Tibial artery (tissue), 4 donors: ENCODE measurements at regions of chr12 and their contacts with region 1.

Region 1: DNA sequence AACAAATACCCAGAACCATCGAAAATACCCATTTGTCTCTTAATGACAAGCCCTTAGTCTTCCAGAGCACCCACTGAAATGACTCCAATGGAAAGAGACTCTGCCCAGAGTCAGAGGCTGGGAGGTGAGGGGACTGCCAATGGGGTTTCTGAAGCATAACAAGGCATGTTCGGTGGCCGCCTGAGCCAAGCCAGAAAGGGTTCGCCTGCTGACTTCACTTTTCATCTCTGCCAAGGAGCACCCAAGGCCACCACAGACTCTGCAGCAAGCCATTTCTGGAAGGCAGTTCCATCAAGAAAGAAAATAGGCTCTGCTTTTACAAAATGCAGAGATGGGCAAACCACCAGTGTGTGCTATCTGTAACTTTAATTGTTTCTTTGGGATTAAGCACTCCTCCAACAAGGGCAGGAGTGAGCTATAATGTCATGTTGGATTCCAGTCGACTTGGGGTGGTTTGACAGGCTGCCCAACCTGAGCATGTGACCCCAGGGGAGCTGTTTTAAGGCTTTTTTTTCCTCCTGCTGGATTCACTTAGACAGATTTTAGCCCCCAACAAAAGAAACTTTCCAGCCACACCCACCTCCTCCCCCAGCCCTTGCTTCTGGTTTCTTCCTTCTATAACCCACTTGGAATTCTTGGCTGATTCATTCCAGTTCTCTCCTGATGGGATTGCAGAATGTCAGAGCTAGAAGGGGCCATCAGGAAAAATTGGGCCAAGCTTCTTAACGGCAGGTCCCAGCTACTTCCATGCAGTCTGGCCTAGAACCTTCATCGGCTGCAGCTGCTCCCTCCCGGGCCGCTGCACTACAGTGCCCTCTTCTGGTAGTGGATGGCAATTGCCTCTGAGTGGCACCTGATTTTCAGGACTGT is 24.1 kb downstream of the CKAP4 start:
- DNase-seq: peak; percentile 55 to 82
- H3K4me3 ChIP-seq: no peak overlapping the region
- H3K27ac ChIP-seq: peak overlapping the region; percentile 10 to 25
- H3K4me1 ChIP-seq: peaks cover 0 to 7% (median 7%) of the 10 kb centered on the region in 4 donors
- H3K27me3 ChIP-seq: no peaks in the 10 kb centered on the region
- CTCF ChIP-seq: peak; percentile 94 to 96

Region 2: GRCh38 chr12:105420659-105421240 is 803.0 kb before region 1 on chr12:
- intact Hi-C with region 1: loop called (anchors 5 kb)
- DNase-seq: peak; percentile 70 to 82
- H3K4me3 ChIP-seq: no peak overlapping the region
- H3K27ac ChIP-seq: no peak overlapping the region
- H3K4me1 ChIP-seq: peaks cover 0 to 17% (median 8%) of the 10 kb centered on the region in 4 donors
- H3K27me3 ChIP-seq: no peaks in the 10 kb centered on the region
- CTCF ChIP-seq: peak; percentile 86 to 95

Region 3: DNA sequence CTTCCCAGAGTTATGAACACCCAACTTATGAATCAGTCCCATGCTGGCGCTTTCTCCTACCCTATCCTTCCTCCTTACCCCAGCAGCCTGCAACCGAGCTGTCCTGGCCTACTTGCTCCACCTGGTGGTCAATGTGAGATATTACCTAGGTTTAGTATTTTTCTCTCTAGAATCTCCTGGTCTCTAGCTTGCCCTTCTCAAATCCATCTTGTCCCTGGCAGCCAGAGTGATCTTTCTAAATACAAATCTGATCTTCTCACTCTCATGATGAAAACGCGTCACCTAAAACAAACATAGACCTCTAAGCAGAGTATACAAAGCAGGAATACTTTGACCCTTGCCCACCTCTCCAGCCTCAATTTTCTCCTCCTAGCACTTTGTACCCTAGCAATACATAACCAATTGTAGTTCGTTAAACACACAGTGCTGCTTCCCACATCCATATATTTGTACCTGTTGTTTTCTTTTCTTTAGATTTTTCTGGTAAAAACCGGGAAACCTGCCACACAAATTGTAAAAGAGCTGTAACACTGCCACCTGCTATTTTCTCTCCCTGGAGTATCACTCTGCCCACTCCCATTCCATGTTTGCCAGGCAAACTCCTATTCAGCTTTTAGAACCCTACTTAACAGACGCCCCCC is 58.9 kb after region 1 on chr12:
- intact Hi-C with region 1: loop called (anchors 5 kb)
- DNase-seq: no peak
- H3K4me3 ChIP-seq: no peak overlapping the region
- H3K27ac ChIP-seq: no peak overlapping the region
- H3K4me1 ChIP-seq: no peaks in the 10 kb centered on the region
- H3K27me3 ChIP-seq: peaks cover 0 to 5% of the 10 kb centered on the region in 2 donors
- CTCF ChIP-seq: peak; percentile 55 to 60

Region 4: GRCh38 chr12:106302401-106303201 is 78.9 kb after region 1 on chr12 and contains the start of gene TCP11L2:
- intact Hi-C with region 1: no loop called
- DNase-seq: peak; percentile 88 to 94
- H3K4me3 ChIP-seq: peak within 1 kb of the TSS; percentile 81 to 97
- H3K27ac ChIP-seq: peak within 1 kb of the TSS; percentile 88 to 97
- H3K4me1 ChIP-seq: peaks cover 4 to 41% (median 27%) of the 10 kb centered on the region in 4 donors
- H3K27me3 ChIP-seq: no peaks in the 10 kb centered on the region
- CTCF ChIP-seq: no peak